GM12878 (cell line): ENCODE measurements at regions of chr5 and their contacts with region 1.

Region 1: GRCh38 chr5:5886812-5887486 is 464.5 kb downstream of the ICE1 start:
- DNase-seq: no peak
- ATAC-seq: peak; percentile 97
- H3K4me3 ChIP-seq: no peak overlapping the region
- H3K27ac ChIP-seq: no peak overlapping the region
- H3K4me1 ChIP-seq: no peaks in the 10 kb centered on the region
- H3K27me3 ChIP-seq: no peaks in the 10 kb centered on the region; a peak in 1 of 4 replicates
- CTCF ChIP-seq: peak; percentile 70 to 82 (median 74)
- EP300 ChIP-seq: no peak
- POLR2A ChIP-seq: no peak
- RAD21 ChIP-seq: peak; percentile 69

Region 2: DNA sequence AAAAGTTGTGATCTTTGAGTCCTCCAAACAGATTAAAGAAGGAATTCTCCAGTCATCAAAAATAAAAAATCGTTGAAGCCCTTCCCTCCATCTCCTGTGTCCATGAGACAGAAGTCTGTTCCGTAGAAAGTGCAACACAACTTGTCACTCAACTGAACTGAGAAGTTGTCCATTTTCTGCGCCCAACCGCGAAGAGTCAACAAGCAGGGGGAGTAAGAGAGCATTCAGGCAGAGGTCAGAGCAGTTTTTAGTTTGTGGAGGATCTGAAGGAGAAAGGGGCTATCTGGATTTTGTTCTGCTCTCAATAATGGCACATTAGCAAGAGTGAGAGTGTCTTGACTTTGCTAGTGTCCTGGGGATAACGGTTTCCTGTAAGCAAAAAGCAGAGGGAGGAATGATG is 160.5 kb before region 1 on chr5:
- CTCF ChIA-PET with region 1: no interaction called
- POLR2A ChIA-PET with region 1: no interaction called
- RAD21 ChIA-PET with region 1: no interaction called
- SMC1A ChIA-PET with region 1: no interaction called
- in situ Hi-C with region 1: no loop called
- intact Hi-C with region 1: no loop called
- DNase-seq: no peak
- ATAC-seq: no peak
- H3K4me3 ChIP-seq: no peak overlapping the region
- H3K27ac ChIP-seq: no peak overlapping the region
- H3K4me1 ChIP-seq: no peaks in the 10 kb centered on the region
- H3K27me3 ChIP-seq: no peaks in the 10 kb centered on the region
- CTCF ChIP-seq: 0 out of 6 replicates have a peak, but pooled peaks of 1 of the 3 experiments have one; percentile 1
- EP300 ChIP-seq: no peak
- POLR2A ChIP-seq: no peak
- RAD21 ChIP-seq: 0 out of 2 replicates have a peak, but pooled peaks have one; percentile 3

Region 3: GRCh38 chr5:5978501-5979376 is 91.8 kb after region 1 on chr5:
- CTCF ChIA-PET with region 1: no interaction called
- POLR2A ChIA-PET with region 1: no interaction called
- RAD21 ChIA-PET with region 1: no interaction called
- SMC1A ChIA-PET with region 1: no interaction called
- in situ Hi-C with region 1: no loop called
- intact Hi-C with region 1: no loop called
- DNase-seq: no peak
- ATAC-seq: no peak
- H3K4me3 ChIP-seq: no peak overlapping the region
- H3K27ac ChIP-seq: no peak overlapping the region
- H3K4me1 ChIP-seq: no peaks in the 10 kb centered on the region
- H3K27me3 ChIP-seq: no peaks in the 10 kb centered on the region
- CTCF ChIP-seq: no peak
- EP300 ChIP-seq: no peak
- POLR2A ChIP-seq: no peak
- RAD21 ChIP-seq: no peak

Region 4: DNA sequence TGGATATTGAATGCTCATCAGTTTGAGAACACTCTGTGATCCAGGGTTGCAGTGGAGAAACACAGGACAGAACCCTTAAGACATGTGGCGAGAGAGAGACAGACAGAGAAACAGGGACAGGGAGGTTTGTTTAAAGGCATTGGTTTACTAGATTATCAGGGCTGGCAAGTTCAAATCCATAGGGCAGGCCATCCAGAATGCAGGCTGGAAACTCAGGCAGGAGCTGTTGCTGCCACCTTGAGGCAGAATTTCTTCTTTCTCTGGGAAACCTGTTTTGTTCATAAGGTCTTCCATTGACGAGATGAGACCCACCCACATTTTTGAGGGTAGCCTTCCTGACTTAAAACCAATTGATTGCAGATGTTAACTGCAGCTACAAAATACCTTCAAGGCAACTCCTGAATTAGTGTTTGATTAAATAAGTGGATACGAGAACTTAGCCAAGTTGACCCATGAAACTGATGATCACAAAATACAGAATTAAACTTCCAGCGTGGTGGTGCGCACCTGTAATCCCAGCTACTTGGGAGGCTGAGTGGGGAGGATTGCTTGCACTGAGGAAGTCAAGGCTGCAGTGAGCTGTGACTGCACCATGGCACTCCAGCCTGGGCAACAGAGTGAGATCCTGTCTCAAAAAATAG is 690.0 kb after region 1 on chr5:
- CTCF ChIA-PET with region 1: no interaction called
- POLR2A ChIA-PET with region 1: no interaction called
- RAD21 ChIA-PET with region 1: interaction called, 4 read pairs
- SMC1A ChIA-PET with region 1: no interaction called
- in situ Hi-C with region 1: no loop called
- intact Hi-C with region 1: loop called (anchors 10 kb)
- DNase-seq: peak; percentile 4
- ATAC-seq: peak; percentile 70
- H3K4me3 ChIP-seq: no peak overlapping the region
- H3K27ac ChIP-seq: no peak overlapping the region
- H3K4me1 ChIP-seq: no peaks in the 10 kb centered on the region
- H3K27me3 ChIP-seq: peaks cover 0 to 3% of the 10 kb centered on the region in 2 experiments; a peak in 3 of 4 replicates
- CTCF ChIP-seq: peak; percentile 49 to 70 (median 53); a peak in 5 of 6 replicates
- EP300 ChIP-seq: no peak
- POLR2A ChIP-seq: no peak
- RAD21 ChIP-seq: peak; percentile 77